Activated T-helper 1 cell treated with anti-CD3 and anti-CD28 coated beads, Interleukin-12 subunit alpha, Interleukin-12 subunit beta, Interleukin-2, Interleukin-4 antibody, amounts not matched to agents 30 ng/mL and 10 ng/mL and 1 ng/mL, durations not matched to agents 14 hours and 24 hours and 36 hours (primary cell): ENCODE measurements at regions of chr18 and their contacts with region 1.

Region 1: DNA sequence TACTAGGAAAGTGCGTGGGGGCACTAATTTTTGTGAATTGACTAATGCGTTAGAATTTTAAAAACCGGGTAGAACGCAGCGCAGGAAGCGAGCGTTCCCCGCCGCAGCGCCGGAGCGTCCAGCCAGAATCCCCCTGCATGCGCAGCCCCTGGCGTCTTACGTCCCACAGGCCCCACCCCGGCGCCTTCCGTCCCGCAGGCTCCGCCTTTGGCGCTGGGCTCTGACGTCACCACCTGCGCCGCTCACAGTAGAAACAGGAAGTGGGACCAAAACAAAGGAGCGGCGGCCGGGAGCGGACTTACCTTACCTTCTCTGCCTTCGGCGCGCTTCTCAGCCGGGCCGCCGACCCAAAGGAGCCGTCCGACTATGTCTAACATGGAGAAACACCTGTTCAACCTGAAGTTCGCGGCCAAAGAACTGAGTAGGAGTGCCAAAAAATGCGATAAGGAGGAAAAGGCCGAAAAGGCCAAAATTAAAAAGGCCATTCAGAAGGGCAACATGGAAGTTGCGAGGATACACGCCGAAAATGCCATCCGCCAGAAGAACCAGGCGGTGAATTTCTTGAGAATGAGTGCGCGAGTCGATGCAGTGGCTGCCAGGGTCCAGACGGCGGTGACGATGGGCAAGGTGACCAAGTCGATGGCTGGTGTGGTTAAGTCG is at the start of gene CHMP1B:
- DNase-seq: peak; percentile 95
- H3K4me3 Mint-ChIP-seq: peak within 1 kb of the TSS; percentile 99
- H3K27ac Mint-ChIP-seq: peak within 1 kb of the TSS; percentile 100
- H3K4me1 Mint-ChIP-seq: peaks cover 38% of the 10 kb centered on the region
- H3K27me3 Mint-ChIP-seq: peaks cover 6% of the 10 kb centered on the region
- total RNA-seq, gene CHMP1B: 24.8 and 26.8 TPM in 2 replicates

Region 2: DNA sequence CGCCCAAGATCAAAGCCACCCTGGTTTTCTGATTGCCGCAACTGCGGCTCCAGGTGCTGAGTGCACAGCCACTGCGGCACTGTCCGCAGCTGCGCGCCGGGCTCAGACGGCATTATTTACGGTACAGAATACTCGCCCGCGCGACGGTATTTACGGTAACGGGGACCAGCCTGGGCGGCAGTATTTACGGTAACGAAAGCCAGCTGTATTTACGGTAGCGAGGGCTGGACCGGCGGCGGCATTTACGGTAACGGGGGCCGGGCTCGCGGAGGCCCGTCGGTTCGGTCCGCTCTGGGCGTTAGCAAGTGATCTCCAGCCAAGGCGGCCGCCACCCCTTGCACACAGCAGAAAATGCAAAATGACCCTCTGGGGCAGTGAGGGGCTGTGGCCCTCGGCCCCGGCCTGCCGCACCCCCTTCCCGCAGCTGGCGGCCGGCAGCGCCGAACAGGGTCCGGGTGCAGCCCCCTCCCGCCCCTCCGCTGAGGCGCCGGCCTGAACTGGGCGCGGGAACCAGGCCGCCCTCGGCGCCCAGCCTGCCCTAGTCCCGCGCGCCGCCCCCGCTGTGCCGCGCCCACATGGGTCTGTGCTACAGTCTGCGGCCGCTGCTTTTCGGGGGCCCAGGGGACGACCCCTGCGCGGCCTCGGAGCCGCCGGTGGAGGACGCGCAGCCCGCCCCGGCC is 162.1 kb before region 1 on chr18 and contains the start of gene GNAL:
- intact Hi-C with region 1: loop called (anchors 2 kb)
- DNase-seq: peak; percentile 49
- H3K4me3 Mint-ChIP-seq: peak within 1 kb of the TSS; percentile 60
- H3K27ac Mint-ChIP-seq: no peak within 1 kb of the TSS
- H3K4me1 Mint-ChIP-seq: peaks cover 8% of the 10 kb centered on the region
- H3K27me3 Mint-ChIP-seq: peaks cover 39% of the 10 kb centered on the region
- total RNA-seq, gene GNAL: 0.21 and 0.24 TPM in 2 replicates

Region 3: GRCh38 chr18:11808001-11808855 is 43.0 kb before region 1 on chr18:
- intact Hi-C with region 1: no loop called
- DNase-seq: no peak
- H3K4me3 Mint-ChIP-seq: no peak overlapping the region
- H3K27ac Mint-ChIP-seq: no peak overlapping the region
- H3K4me1 Mint-ChIP-seq: no peaks in the 10 kb centered on the region
- H3K27me3 Mint-ChIP-seq: peaks cover 3% of the 10 kb centered on the region

Region 4: GRCh38 chr18:11872479-11873136 is 21.3 kb after region 1 on chr18:
- intact Hi-C with region 1: no loop called
- DNase-seq: no peak
- H3K4me3 Mint-ChIP-seq: no peak overlapping the region
- H3K27ac Mint-ChIP-seq: no peak overlapping the region
- H3K4me1 Mint-ChIP-seq: no peaks in the 10 kb centered on the region
- H3K27me3 Mint-ChIP-seq: no peaks in the 10 kb centered on the region

Region 5: GRCh38 chr18:11908182-11909060 is 57.1 kb after region 1 on chr18 and contains the start of gene MPPE1:
- intact Hi-C with region 1: loop called (anchors 1 kb)
- DNase-seq: peak; percentile 87
- H3K4me3 Mint-ChIP-seq: peak within 1 kb of the TSS; percentile 94
- H3K27ac Mint-ChIP-seq: peak within 1 kb of the TSS; percentile 93
- H3K4me1 Mint-ChIP-seq: peaks cover 32% of the 10 kb centered on the region
- H3K27me3 Mint-ChIP-seq: no peaks in the 10 kb centered on the region
- total RNA-seq, gene MPPE1: 45.8 and 47.4 TPM in 2 replicates

Region 6: DNA sequence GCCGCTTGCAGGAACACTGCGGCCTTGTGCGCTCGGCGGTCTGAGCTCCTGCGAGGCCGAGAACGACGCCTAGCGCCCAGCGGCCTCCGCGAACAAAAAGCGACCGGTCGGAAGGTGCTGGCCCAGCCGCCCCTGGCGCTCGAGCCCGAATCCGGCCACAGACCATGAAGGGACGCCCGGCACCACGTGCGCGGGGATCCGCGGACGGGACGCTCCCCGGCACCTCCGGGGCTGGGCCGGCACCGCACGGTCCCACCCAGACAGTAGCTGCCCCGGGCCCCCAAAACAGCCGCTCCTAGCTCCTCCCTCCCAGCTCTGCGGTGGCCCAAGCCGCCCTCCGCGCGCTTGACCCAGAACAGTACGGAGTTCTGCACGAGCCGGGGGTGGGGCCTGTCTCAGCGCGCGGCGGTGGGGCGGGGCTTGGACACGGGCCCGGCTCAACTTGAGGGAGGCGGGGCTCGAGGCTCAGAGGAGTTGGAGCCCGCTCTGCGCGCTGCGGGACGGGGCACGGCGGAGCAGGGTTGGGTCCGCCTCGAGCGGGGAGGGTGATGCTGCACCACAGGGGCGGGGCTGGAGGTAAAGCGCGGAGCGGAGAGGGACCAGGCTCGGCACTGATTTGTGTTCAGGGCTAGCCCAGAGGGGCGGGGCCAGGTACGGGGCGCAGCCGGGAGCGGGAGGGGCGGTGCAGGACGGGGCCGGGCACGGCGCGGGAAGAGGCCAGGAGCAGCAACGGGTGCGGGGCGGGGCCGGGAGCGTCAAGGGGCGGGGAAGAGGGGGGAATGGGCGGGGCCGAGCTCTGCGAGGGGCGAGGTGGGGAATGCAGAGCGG is 129.5 kb after region 1 on chr18:
- intact Hi-C with region 1: loop called (anchors 1 kb)
- DNase-seq: peak; percentile 96
- H3K4me3 Mint-ChIP-seq: peak overlapping the region; percentile 80
- H3K27ac Mint-ChIP-seq: peak overlapping the region; percentile 83
- H3K4me1 Mint-ChIP-seq: peaks cover 15% of the 10 kb centered on the region
- H3K27me3 Mint-ChIP-seq: peaks cover 12% of the 10 kb centered on the region

Region 7: GRCh38 chr18:12308386-12309100 is 457.3 kb after region 1 on chr18:
- intact Hi-C with region 1: loop called (anchors 2 kb)
- DNase-seq: peak; percentile 21
- H3K4me3 Mint-ChIP-seq: peak overlapping the region; percentile 80
- H3K27ac Mint-ChIP-seq: peak overlapping the region; percentile 76
- H3K4me1 Mint-ChIP-seq: peaks cover 19% of the 10 kb centered on the region
- H3K27me3 Mint-ChIP-seq: peaks cover 32% of the 10 kb centered on the region

Region 8: DNA sequence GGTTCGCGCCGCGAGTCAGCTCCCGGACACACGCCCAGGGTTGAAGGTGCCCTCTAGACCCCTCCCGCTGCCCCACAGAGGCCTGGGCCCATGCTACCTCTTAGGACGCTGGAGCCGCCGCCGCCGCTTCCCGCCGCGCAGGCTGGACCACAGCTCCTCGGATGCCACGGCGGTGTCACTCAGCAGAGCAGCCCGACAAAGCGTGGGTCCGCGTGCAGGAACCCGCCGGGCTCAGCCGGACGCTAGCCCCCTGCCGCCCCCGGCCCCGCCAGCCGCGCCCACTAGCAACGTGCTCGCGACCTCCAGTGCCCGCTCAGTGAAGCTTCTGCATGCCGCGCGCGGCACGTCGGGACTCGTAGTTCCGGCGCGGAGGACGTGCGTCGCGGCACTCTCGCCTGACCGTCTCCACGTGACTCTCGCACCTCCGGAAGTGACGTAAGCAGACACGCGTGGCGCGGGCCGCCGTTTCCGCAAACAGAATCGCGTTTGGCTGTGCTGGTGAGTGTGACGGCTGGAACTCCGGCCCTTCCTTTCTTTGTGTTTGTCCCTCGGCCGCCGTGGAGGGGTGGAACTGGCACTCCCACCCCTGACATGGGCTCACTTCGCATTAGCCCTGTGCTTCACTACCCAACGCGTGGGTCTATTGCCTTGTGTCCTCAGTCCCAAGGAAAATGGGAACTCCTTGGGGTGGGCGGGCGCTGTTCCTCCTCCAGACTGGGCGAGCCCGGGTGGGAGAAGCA is 1875.1 kb after region 1 on chr18 and contains the starts of genes FAM210A and RNMT:
- intact Hi-C with region 1: loop called (anchors 5 kb)
- DNase-seq: peak; percentile 94
- H3K4me3 Mint-ChIP-seq: peak within 1 kb of the TSS; percentile 93
- H3K27ac Mint-ChIP-seq: peak within 1 kb of the TSS; percentile 86
- H3K4me1 Mint-ChIP-seq: peaks cover 72% of the 10 kb centered on the region
- H3K27me3 Mint-ChIP-seq: no peaks in the 10 kb centered on the region
- total RNA-seq, gene FAM210A: 27.7 and 29.5 TPM in 2 replicates
- total RNA-seq, gene RNMT: 55.8 and 60.6 TPM in 2 replicates